ENCODE measurements at regions of chr17 and their contacts with region 1.

Region 1: GRCh38 chr17:44344939-44345453 is at the start of gene GRN:
- DNase-seq: peak; percentile 96

Region 2: DNA sequence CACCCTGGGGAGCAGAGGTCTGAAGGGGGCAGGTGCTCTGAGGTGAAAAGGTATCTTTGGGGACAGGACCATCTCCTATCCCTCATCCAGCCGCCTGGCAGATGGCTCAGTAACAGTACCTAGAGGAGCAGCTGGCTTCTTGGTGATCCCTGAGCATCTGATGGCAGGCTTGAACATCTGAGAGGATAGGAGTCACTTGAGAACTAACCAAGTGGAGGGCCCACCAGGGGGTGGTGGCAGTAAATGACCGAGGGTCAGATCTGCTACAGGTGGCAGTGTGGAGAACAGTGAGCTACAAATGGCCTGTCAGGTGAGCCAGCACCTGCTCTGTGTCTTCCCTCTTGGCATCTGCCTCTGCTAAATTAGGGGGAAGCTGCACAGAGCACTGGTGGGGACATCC is 189.5 kb before region 1 on chr17:
- CTCF ChIA-PET with region 1: no interaction called
- POLR2A ChIA-PET with region 1: no interaction called
- DNase-seq: no peak

Region 3: GRCh38 chr17:44210342-44211192 is 134.4 kb before region 1 on chr17:
- CTCF ChIA-PET with region 1: interaction called, 14 read pairs
- POLR2A ChIA-PET with region 1: interaction called, 8 read pairs
- DNase-seq: peak; percentile 90

Region 4: GRCh38 chr17:44331249-44331760 is 13.7 kb before region 1 on chr17:
- CTCF ChIA-PET with region 1: interaction called, 28 read pairs
- POLR2A ChIA-PET with region 1: interaction called, 9 read pairs
- DNase-seq: peak; percentile 72

Region 5: DNA sequence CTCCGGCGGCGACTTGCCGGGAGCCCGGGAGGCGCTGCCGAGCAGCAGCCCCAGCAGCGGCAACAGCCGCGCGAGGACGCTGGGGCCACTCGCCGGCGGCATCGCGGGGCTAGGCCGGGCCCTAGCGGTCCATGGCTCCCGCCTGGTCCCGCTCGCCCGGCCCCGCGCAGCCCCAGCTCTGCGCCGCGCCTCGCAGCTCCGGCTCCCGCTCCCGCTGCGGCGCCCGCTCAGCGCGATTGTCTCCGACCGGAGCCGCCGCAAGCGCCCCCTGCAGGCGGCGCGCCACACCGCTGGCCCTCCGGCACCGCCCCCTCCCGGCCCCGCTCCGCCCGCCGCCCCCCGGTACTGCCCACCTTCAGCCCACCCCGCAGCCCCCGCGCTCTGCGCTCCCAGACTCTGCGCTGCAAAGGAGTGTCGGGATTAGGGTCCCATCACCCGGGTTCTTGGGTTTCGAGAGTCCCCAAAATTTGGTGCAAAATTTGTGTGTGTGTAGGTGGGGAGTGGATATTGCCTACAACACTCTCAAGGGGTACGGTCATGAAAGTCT is 18.7 kb after region 1 on chr17 and contains the start of gene FAM171A2:
- CTCF ChIA-PET with region 1: interaction called, 5 read pairs
- POLR2A ChIA-PET with region 1: interaction called, 14 read pairs
- DNase-seq: peak; percentile 91

Region 6: GRCh38 chr17:44708401-44709181 is 363.6 kb after region 1 on chr17 and contains the start of gene DBF4B:
- CTCF ChIA-PET with region 1: no interaction called
- POLR2A ChIA-PET with region 1: no interaction called
- DNase-seq: peak; percentile 84

Measured in HEK293T (cell line).